WTC11 (cell line): ENCODE measurements at regions of chr1 and their contacts with region 1.

Region 1: GRCh38 chr1:31257213-31257612 is 17.5 kb upstream of the NKAIN1 start:
- DNase-seq: no peak
- ATAC-seq: no peak
- H3K4me3 Mint-ChIP-seq: no peak overlapping the region
- H3K27ac Mint-ChIP-seq: no peak overlapping the region
- H3K4me1 Mint-ChIP-seq: peaks cover 17% of the 10 kb centered on the region
- H3K27me3 Mint-ChIP-seq: no peaks in the 10 kb centered on the region
- CTCF ChIP-seq: no peak

Region 2: GRCh38 chr1:31054349-31054748 is 202.9 kb before region 1 on chr1:
- CTCF ChIA-PET with region 1: no interaction called
- POLR2A ChIA-PET with region 1: interaction called, 11 read pairs
- DNase-seq: no peak
- ATAC-seq: no peak
- H3K4me3 Mint-ChIP-seq: no peak overlapping the region
- H3K27ac Mint-ChIP-seq: no peak overlapping the region
- H3K4me1 Mint-ChIP-seq: peaks cover 27% of the 10 kb centered on the region
- H3K27me3 Mint-ChIP-seq: no peaks in the 10 kb centered on the region
- CTCF ChIP-seq: no peak

Region 3: GRCh38 chr1:31239653-31240241 is 17.5 kb before region 1 on chr1 and contains the start of gene NKAIN1:
- CTCF ChIA-PET with region 1: no interaction called
- POLR2A ChIA-PET with region 1: no interaction called
- DNase-seq: peak; percentile 67
- ATAC-seq: peak; percentile 75
- H3K4me3 Mint-ChIP-seq: peak within 1 kb of the TSS; percentile 75
- H3K27ac Mint-ChIP-seq: no peak within 1 kb of the TSS
- H3K4me1 Mint-ChIP-seq: peaks cover 17% of the 10 kb centered on the region
- H3K27me3 Mint-ChIP-seq: peaks cover 26% of the 10 kb centered on the region
- CTCF ChIP-seq: no peak
- total RNA-seq, gene NKAIN1: 34.0 to 36.8 TPM (median 35.3 TPM) in 3 replicates

Region 4: DNA sequence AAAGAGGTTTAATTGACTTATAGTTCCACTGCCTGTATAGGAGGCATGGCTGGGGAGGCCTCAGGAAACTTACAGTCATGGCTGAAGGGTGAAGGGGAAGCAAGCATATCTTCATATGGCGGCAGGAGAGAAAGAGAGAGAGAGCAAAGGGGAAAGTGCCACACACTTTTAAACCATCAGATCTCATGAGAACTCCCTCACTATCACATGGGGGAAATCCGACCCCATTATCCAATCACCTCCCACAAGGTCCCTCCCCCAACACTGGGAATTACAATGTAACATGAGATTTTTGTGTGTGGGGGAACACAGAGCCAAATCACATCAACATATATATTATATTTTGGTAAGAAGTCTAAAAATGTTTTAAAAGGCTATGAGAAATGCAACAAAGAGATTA is 88.4 kb after region 1 on chr1:
- CTCF ChIA-PET with region 1: no interaction called
- POLR2A ChIA-PET with region 1: no interaction called
- DNase-seq: no peak
- ATAC-seq: peak; percentile 34; the same call in 1 of the 2 replicates
- H3K4me3 Mint-ChIP-seq: no peak overlapping the region
- H3K27ac Mint-ChIP-seq: peak overlapping the region; percentile 44; the same call in 1 of the 2 replicates
- H3K4me1 Mint-ChIP-seq: peaks cover 6% of the 10 kb centered on the region; the same call in 1 of the 2 replicates
- H3K27me3 Mint-ChIP-seq: no peaks in the 10 kb centered on the region
- CTCF ChIP-seq: no peak